ENCODE measurements at regions of chr2 and their contacts with region 1.

Region 1: DNA sequence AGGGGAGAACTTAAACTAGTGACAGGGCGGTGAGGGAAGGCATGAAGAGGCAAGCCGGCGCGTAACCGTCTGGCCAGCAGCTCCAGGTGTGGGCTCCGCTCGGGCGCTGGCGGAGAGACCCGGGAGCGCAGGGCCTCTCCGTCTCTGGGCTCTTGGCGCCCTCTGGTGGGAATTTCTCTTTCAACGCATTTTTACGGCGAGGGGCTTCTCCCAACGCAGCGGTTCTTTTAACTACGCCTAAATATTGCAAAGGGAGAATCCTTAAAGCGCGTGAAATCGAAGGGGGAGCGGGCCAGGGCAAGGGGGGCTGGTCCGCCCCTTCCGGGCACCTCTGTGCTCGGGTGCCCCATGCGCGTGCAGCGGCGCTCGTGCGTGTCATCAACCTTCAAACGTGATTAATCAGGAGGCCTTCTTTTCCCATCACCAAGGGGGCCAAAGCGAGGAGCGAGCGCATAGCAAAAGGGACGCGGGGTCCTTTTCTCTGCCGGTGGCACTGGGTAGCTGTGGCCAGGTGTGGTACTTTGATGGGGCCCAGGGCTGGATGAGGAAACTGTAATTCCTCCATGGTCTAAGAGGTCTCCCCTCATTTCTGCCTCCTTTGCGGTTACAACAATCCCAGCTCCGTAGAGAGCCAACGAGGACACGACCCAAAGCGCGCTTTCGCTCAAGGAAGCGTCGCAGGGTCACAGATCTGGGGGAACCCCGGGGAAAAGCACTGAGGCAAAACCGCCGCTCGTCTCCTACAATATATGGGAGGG is 762 bp upstream of the GAD1 start:
- DNase-seq: peak; percentile 86
- ATAC-seq: peak; percentile 50
- H3K4me3 Mint-ChIP-seq: peak overlapping the region; percentile 70
- H3K27ac Mint-ChIP-seq: peak overlapping the region; percentile 31
- H3K4me1 Mint-ChIP-seq: peaks cover 44% of the 10 kb centered on the region
- H3K27me3 Mint-ChIP-seq: peaks cover 63% of the 10 kb centered on the region

Region 2: GRCh38 chr2:170235860-170236679 is 579.9 kb before region 1 on chr2:
- CTCF ChIA-PET with region 1: interaction called, 4 read pairs
- POLR2A ChIA-PET with region 1: no interaction called
- intact Hi-C with region 1: loop called (anchors 1 to 5 kb)
- DNase-seq: peak; percentile 46
- ATAC-seq: peak; percentile 63
- H3K4me3 Mint-ChIP-seq: no peak overlapping the region
- H3K27ac Mint-ChIP-seq: no peak overlapping the region
- H3K4me1 Mint-ChIP-seq: no peaks in the 10 kb centered on the region
- H3K27me3 Mint-ChIP-seq: peaks cover 15% of the 10 kb centered on the region

Region 3: GRCh38 chr2:170361090-170361936 is 454.6 kb before region 1 on chr2:
- CTCF ChIA-PET with region 1: interaction called, 34 read pairs
- POLR2A ChIA-PET with region 1: no interaction called
- intact Hi-C with region 1: loop called (anchors 1 kb)
- DNase-seq: peak; percentile 76
- ATAC-seq: peak; percentile 58
- H3K4me3 Mint-ChIP-seq: no peak overlapping the region
- H3K27ac Mint-ChIP-seq: peak overlapping the region; percentile 90
- H3K4me1 Mint-ChIP-seq: peaks cover 29% of the 10 kb centered on the region
- H3K27me3 Mint-ChIP-seq: peaks cover 7% of the 10 kb centered on the region

Region 4: GRCh38 chr2:170396799-170397459 is 419.0 kb before region 1 on chr2:
- CTCF ChIA-PET with region 1: interaction called, 5 read pairs
- POLR2A ChIA-PET with region 1: no interaction called
- intact Hi-C with region 1: loop called in 1 of 2 experiments (anchors 1 kb)
- DNase-seq: no peak
- ATAC-seq: no peak
- H3K4me3 Mint-ChIP-seq: no peak overlapping the region
- H3K27ac Mint-ChIP-seq: no peak overlapping the region
- H3K4me1 Mint-ChIP-seq: no peaks in the 10 kb centered on the region
- H3K27me3 Mint-ChIP-seq: peaks cover 25% of the 10 kb centered on the region

Region 5: GRCh38 chr2:170715062-170715931 is 100.6 kb before region 1 on chr2 and contains the start of gene SP5:
- CTCF ChIA-PET with region 1: interaction called, 9 read pairs
- POLR2A ChIA-PET with region 1: no interaction called
- intact Hi-C with region 1: loop called (anchors 1 to 2 kb)
- DNase-seq: peak; percentile 48
- ATAC-seq: peak; percentile 52
- H3K4me3 Mint-ChIP-seq: peak within 1 kb of the TSS; percentile 70
- H3K27ac Mint-ChIP-seq: no peak within 1 kb of the TSS
- H3K4me1 Mint-ChIP-seq: peaks cover 26% of the 10 kb centered on the region
- H3K27me3 Mint-ChIP-seq: peaks cover 66% of the 10 kb centered on the region
- total RNA-seq, gene SP5: 0.37 TPM in 1 of 2 experiments, not detected in the other

Region 6: GRCh38 chr2:170873035-170873692 is 57.2 kb after region 1 on chr2:
- CTCF ChIA-PET with region 1: interaction called, 16 read pairs
- POLR2A ChIA-PET with region 1: no interaction called
- intact Hi-C with region 1: loop called (anchors 2 to 5 kb)
- DNase-seq: peak; percentile 89
- ATAC-seq: peak; percentile 99
- H3K4me3 Mint-ChIP-seq: peak overlapping the region; percentile 40
- H3K27ac Mint-ChIP-seq: peak overlapping the region; percentile 17
- H3K4me1 Mint-ChIP-seq: peaks cover 13% of the 10 kb centered on the region
- H3K27me3 Mint-ChIP-seq: no peaks in the 10 kb centered on the region

Region 7: GRCh38 chr2:171237751-171238505 is 422.0 kb after region 1 on chr2:
- CTCF ChIA-PET with region 1: no interaction called
- POLR2A ChIA-PET with region 1: no interaction called
- intact Hi-C with region 1: no loop called
- DNase-seq: no peak
- ATAC-seq: no peak
- H3K4me3 Mint-ChIP-seq: no peak overlapping the region
- H3K27ac Mint-ChIP-seq: no peak overlapping the region
- H3K4me1 Mint-ChIP-seq: peaks cover 8% of the 10 kb centered on the region
- H3K27me3 Mint-ChIP-seq: no peaks in the 10 kb centered on the region